ENCODE measurements at regions of chr2 and their contacts with region 1.

Region 1: GRCh38 chr2:190319555-190320498 is at the start of gene HIBCH:
- DNase-seq: peak; percentile 98
- H3K4me3 ChIP-seq: peak within 1 kb of the TSS; percentile 56 to 78 (median 60)
- H3K27ac ChIP-seq: peak within 1 kb of the TSS; percentile 14
- H3K4me1 ChIP-seq: peaks cover 18% of the 10 kb centered on the region
- H3K27me3 ChIP-seq: no peaks in the 10 kb centered on the region
- CTCF ChIP-seq: peak; percentile 80 to 83
- POLR2A ChIP-seq: peak; percentile 66
- total RNA-seq, gene HIBCH: 23.2 and 24.7 TPM in 2 replicates

Region 2: GRCh38 chr2:189783927-189784867 is 535.6 kb before region 1 on chr2 and contains the starts of genes ORMDL1 and PMS1:
- CTCF ChIA-PET with region 1: interaction called, 4 read pairs
- POLR2A ChIA-PET with region 1: no interaction called
- dilution Hi-C with region 1: no loop called
- intact Hi-C with region 1: loop called (anchors 1 kb)
- DNase-seq: peak; percentile 98
- H3K4me3 ChIP-seq: peak within 1 kb of the TSS; percentile 73 to 95 (median 87)
- H3K27ac ChIP-seq: peak within 1 kb of the TSS; percentile 71
- H3K4me1 ChIP-seq: peaks cover 16% of the 10 kb centered on the region
- H3K27me3 ChIP-seq: no peaks in the 10 kb centered on the region
- CTCF ChIP-seq: no peak
- POLR2A ChIP-seq: peak; percentile 92
- total RNA-seq, gene ORMDL1: 58.0 and 63.3 TPM in 2 replicates
- total RNA-seq, gene PMS1: 27.8 and 28.4 TPM in 2 replicates

Region 3: GRCh38 chr2:190301032-190301431 is 18.8 kb before region 1 on chr2:
- CTCF ChIA-PET with region 1: interaction called, 10 read pairs
- POLR2A ChIA-PET with region 1: no interaction called
- dilution Hi-C with region 1: no loop called
- intact Hi-C with region 1: no loop called
- DNase-seq: peak; percentile 29
- H3K4me3 ChIP-seq: no peak overlapping the region
- H3K27ac ChIP-seq: no peak overlapping the region
- H3K4me1 ChIP-seq: no peaks in the 10 kb centered on the region
- H3K27me3 ChIP-seq: no peaks in the 10 kb centered on the region
- CTCF ChIP-seq: no peak
- POLR2A ChIP-seq: no peak

Region 4: DNA sequence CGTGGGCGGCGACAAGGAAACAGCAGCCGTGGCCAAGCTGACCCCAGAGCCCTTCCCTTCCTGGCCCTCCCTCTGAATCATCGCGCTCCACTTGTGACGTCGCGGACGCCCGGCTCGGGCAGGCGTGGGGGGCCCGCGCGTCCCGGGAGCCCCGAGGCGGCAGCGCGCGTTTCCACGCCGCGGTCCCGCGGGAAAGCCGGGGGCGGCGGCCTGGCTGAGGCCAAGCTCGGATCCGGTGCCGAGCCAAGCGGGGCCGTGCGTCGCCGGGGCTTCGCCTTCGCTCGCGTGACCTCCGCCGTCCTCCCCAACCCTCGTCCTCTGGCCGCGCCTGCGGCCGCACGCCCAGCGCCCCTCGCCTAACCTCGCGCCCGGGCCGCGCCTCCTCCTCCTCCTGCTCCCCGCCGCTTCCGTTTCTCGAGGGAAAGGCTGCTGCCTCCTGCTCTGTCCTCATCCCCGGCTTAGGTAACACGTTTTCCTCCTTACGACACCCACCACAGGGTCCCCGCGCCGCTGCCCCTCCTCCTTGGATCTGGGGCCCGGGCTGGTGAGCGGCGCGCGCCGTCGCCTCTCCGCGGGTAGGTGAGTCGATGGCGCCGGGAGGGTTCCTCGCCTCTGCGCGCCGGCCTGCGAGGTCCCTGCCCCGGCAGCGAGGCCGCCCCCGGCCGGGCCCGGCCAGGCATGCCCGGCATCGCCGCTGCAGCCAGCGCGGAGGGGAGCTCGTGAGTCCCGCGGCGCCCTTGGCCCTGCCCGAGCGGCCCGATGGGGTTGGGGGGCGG is 23.9 kb after region 1 on chr2 and contains the start of gene INPP1:
- CTCF ChIA-PET with region 1: interaction called, 18 read pairs
- POLR2A ChIA-PET with region 1: interaction called, 5 read pairs
- dilution Hi-C with region 1: no loop called
- intact Hi-C with region 1: loop called (anchors 1 kb)
- DNase-seq: peak; percentile 79
- H3K4me3 ChIP-seq: peak within 1 kb of the TSS; percentile 58 to 90 (median 67)
- H3K27ac ChIP-seq: peak within 1 kb of the TSS; percentile 73
- H3K4me1 ChIP-seq: peaks cover 14% of the 10 kb centered on the region
- H3K27me3 ChIP-seq: no peaks in the 10 kb centered on the region
- CTCF ChIP-seq: no peak
- POLR2A ChIP-seq: peak; percentile 63
- total RNA-seq, gene INPP1: 32.6 and 36.8 TPM in 2 replicates

Region 5: GRCh38 chr2:190379249-190379964 is 59.6 kb after region 1 on chr2:
- CTCF ChIA-PET with region 1: no interaction called
- POLR2A ChIA-PET with region 1: no interaction called
- dilution Hi-C with region 1: no loop called
- intact Hi-C with region 1: no loop called
- DNase-seq: no peak
- H3K4me3 ChIP-seq: no peak overlapping the region
- H3K27ac ChIP-seq: no peak overlapping the region
- H3K4me1 ChIP-seq: no peaks in the 10 kb centered on the region
- H3K27me3 ChIP-seq: peaks cover 0 to 4% of the 10 kb centered on the region in 2 experiments
- CTCF ChIP-seq: no peak
- POLR2A ChIP-seq: no peak

Region 6: GRCh38 chr2:190511104-190511503 is 191.3 kb after region 1 on chr2:
- CTCF ChIA-PET with region 1: interaction called, 12 read pairs
- POLR2A ChIA-PET with region 1: no interaction called
- dilution Hi-C with region 1: no loop called
- intact Hi-C with region 1: no loop called
- DNase-seq: peak; percentile 65
- H3K4me3 ChIP-seq: no peak overlapping the region
- H3K27ac ChIP-seq: no peak overlapping the region
- H3K4me1 ChIP-seq: no peaks in the 10 kb centered on the region
- H3K27me3 ChIP-seq: no peaks in the 10 kb centered on the region
- CTCF ChIP-seq: peak; percentile 20 to 30
- POLR2A ChIP-seq: no peak

Region 7: DNA sequence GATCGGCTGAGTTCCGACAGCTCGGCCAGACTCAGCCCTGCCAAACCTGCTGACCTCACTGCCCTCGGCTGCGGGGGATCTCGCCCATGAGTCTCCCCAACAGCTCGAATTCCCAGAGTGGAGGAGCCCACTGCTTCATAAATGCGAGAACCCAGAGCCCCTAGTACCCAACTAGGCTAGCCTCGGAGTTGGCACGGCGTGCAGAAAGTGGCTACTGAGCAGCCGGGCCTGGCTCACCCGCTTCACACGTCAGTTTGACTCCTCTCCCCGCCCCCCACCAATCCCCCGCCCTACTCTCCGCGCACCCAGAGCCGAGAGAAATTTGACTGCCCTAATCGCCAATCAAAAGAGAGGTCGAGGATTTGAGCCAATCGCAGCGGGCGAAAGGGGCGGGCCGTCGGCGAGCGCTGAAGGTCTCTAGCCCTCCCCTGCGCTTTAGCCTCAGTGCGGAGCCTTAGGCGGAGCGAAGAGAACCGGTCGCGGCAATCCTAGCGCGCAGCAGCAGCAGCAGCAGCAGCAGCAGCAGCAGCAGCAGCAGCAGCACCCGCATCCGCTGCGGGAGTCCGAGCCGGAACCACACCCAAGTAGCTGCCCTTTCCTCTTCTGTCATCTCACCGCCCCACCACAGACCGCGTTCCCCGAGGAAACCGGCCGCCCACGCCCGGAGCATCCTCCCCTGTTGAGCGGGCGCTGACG is 560.7 kb after region 1 on chr2 and contains the start of gene GLS:
- CTCF ChIA-PET with region 1: no interaction called
- POLR2A ChIA-PET with region 1: no interaction called
- dilution Hi-C with region 1: no loop called
- intact Hi-C with region 1: loop called (anchors 1 kb)
- DNase-seq: peak; percentile 98
- H3K4me3 ChIP-seq: peak within 1 kb of the TSS; percentile 80 to 99 (median 98)
- H3K27ac ChIP-seq: peak within 1 kb of the TSS; percentile 83
- H3K4me1 ChIP-seq: peaks cover 32% of the 10 kb centered on the region
- H3K27me3 ChIP-seq: no peaks in the 10 kb centered on the region
- CTCF ChIP-seq: no peak
- POLR2A ChIP-seq: peak; percentile 99
- total RNA-seq, gene GLS: 181 and 183 TPM in 2 replicates

Measured in endothelial cell of umbilical vein (primary cell).